Activated naive CD4-positive, alpha-beta T cell treated with anti-CD3 and anti-CD28 coated beads for 36 hours (primary cell): ENCODE measurements at regions of chr18 and their contacts with region 1.

Region 1: GRCh38 chr18:46073474-46074331 is 1.6 kb upstream of the PSTPIP2 start:
- DNase-seq: peak; percentile 75
- H3K4me3 Mint-ChIP-seq: no peak overlapping the region
- H3K27ac Mint-ChIP-seq: no peak overlapping the region
- H3K4me1 Mint-ChIP-seq: peaks cover 40% of the 10 kb centered on the region
- H3K27me3 Mint-ChIP-seq: no peaks in the 10 kb centered on the region

Region 2: DNA sequence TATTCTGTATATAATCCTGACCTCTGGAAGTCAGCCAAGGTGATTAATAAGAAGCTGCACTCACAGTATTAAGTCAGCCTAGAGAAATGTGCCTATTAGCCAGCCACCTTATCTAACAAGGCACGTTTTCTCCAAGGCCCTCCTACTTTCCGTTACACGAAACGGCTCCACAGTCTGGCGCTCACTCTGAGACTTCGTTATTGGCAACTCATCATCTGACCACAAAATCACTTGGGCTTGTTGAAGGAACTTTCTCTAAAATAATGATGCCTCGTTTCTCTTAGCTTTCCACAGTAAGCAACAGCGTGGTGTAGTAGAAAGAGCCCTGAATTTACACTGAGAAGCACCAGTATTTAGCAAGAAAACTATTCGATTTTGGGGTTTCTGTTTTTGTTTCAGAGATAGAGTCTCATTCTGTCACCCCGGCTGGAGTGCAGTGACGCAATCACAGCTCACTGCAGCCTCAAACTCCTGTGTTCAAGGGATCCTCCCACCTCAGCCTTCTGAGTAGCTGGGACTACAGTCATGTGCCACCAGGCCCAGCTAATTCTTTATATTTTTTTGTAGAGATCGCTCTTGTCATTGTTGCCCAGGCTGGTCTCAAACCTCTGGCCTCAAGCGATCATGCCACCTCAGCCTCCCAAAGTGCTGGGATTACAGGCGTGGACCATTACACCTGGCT is 403.3 kb before region 1 on chr18:
- CTCF ChIA-PET with region 1: interaction called, 26 read pairs
- intact Hi-C with region 1: loop called (anchors 1 kb)
- DNase-seq: peak; percentile 76
- H3K4me3 Mint-ChIP-seq: peak overlapping the region; percentile 56
- H3K27ac Mint-ChIP-seq: peak overlapping the region; percentile 81
- H3K4me1 Mint-ChIP-seq: peaks cover 61% of the 10 kb centered on the region
- H3K27me3 Mint-ChIP-seq: no peaks in the 10 kb centered on the region

Region 3: GRCh38 chr18:45806226-45806625 is 267.5 kb before region 1 on chr18:
- CTCF ChIA-PET with region 1: no interaction called
- intact Hi-C with region 1: no loop called
- DNase-seq: no peak
- H3K4me3 Mint-ChIP-seq: no peak overlapping the region
- H3K27ac Mint-ChIP-seq: no peak overlapping the region
- H3K4me1 Mint-ChIP-seq: peaks cover 15% of the 10 kb centered on the region
- H3K27me3 Mint-ChIP-seq: peaks cover 4% of the 10 kb centered on the region

Region 4: GRCh38 chr18:45839414-45840395 is 234.0 kb before region 1 on chr18:
- CTCF ChIA-PET with region 1: no interaction called
- intact Hi-C with region 1: loop called (anchors 1 kb)
- DNase-seq: peak; percentile 49
- H3K4me3 Mint-ChIP-seq: no peak overlapping the region
- H3K27ac Mint-ChIP-seq: no peak overlapping the region
- H3K4me1 Mint-ChIP-seq: peaks cover 11% of the 10 kb centered on the region
- H3K27me3 Mint-ChIP-seq: peaks cover 28% of the 10 kb centered on the region

Region 5: DNA sequence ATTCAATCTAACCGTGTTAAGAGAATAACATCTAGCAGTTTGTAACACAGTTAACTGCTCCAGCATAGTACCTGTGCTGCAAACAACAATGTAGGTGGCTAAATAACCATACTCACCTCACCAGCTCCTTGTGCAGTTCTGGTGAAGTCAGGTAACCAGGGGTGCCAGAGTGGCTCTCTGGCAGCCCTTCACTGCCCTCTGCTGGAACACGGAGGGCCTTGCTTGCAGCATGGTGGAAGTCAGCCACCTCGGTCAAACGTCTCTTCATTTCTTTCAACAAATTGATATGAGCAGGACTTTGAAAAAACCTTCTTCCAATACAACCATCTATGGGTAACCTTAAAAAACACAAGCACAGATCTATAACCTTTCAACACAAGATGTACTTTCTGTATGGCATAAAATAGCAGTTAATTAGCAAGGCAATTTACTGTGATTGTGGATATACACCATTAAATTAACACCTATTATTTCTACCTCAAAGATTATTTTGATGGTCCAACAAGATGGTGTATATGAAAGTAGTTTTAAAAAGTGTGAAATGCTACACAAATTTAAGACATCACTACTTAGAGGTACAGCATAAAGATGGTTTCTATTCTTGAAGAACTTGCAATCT is 163.2 kb before region 1 on chr18:
- CTCF ChIA-PET with region 1: interaction called, 8 read pairs
- intact Hi-C with region 1: loop called (anchors 1 kb)
- DNase-seq: peak; percentile 76
- H3K4me3 Mint-ChIP-seq: no peak overlapping the region
- H3K27ac Mint-ChIP-seq: no peak overlapping the region
- H3K4me1 Mint-ChIP-seq: no peaks in the 10 kb centered on the region
- H3K27me3 Mint-ChIP-seq: no peaks in the 10 kb centered on the region

Region 6: GRCh38 chr18:45997700-45998151 is 76.0 kb before region 1 on chr18:
- CTCF ChIA-PET with region 1: interaction called, 12 read pairs
- intact Hi-C with region 1: loop called (anchors 1 kb)
- DNase-seq: peak; percentile 45
- H3K4me3 Mint-ChIP-seq: peak overlapping the region; percentile 73
- H3K27ac Mint-ChIP-seq: peak overlapping the region; percentile 88
- H3K4me1 Mint-ChIP-seq: peaks cover 39% of the 10 kb centered on the region
- H3K27me3 Mint-ChIP-seq: no peaks in the 10 kb centered on the region

Region 7: DNA sequence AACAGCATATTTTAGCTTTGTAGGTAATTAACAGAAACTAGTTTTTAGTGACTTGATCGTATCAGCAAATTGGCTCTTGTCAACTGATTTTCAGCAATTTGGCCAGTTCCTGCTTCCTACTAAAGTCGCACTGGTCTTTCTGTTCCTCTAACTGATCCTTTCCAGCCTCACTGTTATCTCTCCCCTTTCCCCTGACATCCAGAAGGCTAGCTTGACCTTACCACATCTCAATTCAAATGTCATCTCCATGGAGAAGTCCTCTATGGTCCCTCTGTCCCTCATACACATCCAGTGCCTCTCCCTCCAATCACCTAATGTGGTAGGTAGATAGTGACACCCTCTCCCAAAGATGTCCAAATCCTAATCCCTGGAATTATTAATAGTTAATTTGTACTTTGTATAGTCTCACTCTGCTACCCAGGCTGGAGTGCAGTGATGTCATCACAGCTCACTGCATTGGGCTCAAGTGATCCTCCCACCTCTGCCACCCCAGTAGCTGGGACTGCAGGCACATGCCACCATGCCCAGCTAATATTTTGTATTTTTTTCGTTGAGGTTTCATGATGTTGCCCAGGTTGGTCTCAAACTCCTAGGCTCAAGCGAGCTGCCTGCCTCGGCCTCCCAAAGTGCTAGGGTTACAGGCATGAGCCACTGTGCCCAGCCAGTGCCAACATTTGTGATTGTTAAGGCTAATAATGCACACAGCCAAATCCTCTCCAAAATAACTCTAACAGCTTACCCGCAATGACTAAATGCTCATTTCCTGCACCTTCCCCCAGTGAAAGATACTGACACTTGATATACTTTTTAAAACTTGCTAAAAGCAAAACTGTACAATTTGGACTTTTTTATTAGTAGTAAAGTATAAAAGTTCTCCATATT is 18.5 kb before region 1 on chr18:
- CTCF ChIA-PET with region 1: interaction called, 28 read pairs
- intact Hi-C with region 1: loop called (anchors 1 kb)
- DNase-seq: peak; percentile 40
- H3K4me3 Mint-ChIP-seq: no peak overlapping the region
- H3K27ac Mint-ChIP-seq: peak overlapping the region; percentile 44
- H3K4me1 Mint-ChIP-seq: peaks cover 41% of the 10 kb centered on the region
- H3K27me3 Mint-ChIP-seq: no peaks in the 10 kb centered on the region

Region 8: DNA sequence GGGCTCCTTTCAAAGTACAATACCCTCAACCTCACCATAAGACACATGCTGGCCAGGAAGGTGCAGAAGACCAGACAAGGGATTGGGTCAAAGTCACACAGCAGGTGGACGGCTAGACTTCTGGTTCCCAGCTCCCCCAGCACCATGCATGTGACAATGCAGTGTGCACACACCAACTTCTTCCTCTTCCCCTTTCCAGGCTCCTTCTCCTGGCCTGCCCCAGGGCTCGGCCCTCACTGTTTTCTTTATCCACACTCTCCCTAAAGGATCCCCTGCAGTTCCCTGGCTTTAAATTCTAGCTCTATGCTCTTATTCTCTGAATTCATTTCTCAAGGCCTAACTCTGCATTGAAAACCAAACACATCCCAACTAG is 501.0 kb after region 1 on chr18:
- CTCF ChIA-PET with region 1: no interaction called
- intact Hi-C with region 1: no loop called
- DNase-seq: no peak
- H3K4me3 Mint-ChIP-seq: no peak overlapping the region
- H3K27ac Mint-ChIP-seq: no peak overlapping the region
- H3K4me1 Mint-ChIP-seq: no peaks in the 10 kb centered on the region
- H3K27me3 Mint-ChIP-seq: peaks cover under 1% of the 10 kb centered on the region